HAP-1 (cell line): ENCODE measurements at regions of chr19 and their contacts with region 1.

Region 1: DNA sequence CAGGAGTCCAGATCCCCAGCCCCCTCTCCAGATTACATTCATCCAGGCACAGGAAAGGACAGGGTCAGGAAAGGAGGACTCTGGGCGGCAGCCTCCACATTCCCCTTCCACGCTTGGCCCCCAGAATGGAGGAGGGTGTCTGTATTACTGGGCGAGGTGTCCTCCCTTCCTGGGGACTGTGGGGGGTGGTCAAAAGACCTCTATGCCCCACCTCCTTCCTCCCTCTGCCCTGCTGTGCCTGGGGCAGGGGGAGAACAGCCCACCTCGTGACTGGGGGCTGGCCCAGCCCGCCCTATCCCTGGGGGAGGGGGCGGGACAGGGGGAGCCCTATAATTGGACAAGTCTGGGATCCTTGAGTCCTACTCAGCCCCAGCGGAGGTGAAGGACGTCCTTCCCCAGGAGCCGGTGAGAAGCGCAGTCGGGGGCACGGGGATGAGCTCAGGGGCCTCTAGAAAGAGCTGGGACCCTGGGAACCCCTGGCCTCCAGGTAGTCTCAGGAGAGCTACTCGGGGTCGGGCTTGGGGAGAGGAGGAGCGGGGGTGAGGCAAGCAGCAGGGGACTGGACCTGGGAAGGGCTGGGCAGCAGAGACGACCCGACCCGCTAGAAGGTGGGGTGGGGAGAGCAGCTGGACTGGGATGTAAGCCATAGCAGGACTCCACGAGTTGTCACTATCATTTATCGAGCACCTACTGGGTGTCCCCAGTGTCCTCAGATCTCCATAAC is at the start of gene APOE:
- DNase-seq: peak in 1 of 2 experiments; percentile 58
- H3K4me3 ChIP-seq: peak within 1 kb of the TSS; percentile 29
- H3K4me1 ChIP-seq: peaks cover 13% of the 10 kb centered on the region
- H3K27me3 ChIP-seq: no peaks in the 10 kb centered on the region

Region 2: GRCh38 chr19:44764975-44765948 is 140.3 kb before region 1 on chr19:
- in situ Hi-C with region 1: no loop called
- DNase-seq: no peak
- H3K4me3 ChIP-seq: no peak overlapping the region
- H3K4me1 ChIP-seq: no peaks in the 10 kb centered on the region
- H3K27me3 ChIP-seq: no peaks in the 10 kb centered on the region

Region 3: GRCh38 chr19:44947041-44947581 is 41.5 kb after region 1 on chr19:
- in situ Hi-C with region 1: loop called (anchors 5 kb)
- DNase-seq: no peak
- H3K4me3 ChIP-seq: no peak overlapping the region
- H3K4me1 ChIP-seq: no peaks in the 10 kb centered on the region
- H3K27me3 ChIP-seq: no peaks in the 10 kb centered on the region